ENCODE measurements at regions of chr22 and their contacts with region 1.

Region 1: DNA sequence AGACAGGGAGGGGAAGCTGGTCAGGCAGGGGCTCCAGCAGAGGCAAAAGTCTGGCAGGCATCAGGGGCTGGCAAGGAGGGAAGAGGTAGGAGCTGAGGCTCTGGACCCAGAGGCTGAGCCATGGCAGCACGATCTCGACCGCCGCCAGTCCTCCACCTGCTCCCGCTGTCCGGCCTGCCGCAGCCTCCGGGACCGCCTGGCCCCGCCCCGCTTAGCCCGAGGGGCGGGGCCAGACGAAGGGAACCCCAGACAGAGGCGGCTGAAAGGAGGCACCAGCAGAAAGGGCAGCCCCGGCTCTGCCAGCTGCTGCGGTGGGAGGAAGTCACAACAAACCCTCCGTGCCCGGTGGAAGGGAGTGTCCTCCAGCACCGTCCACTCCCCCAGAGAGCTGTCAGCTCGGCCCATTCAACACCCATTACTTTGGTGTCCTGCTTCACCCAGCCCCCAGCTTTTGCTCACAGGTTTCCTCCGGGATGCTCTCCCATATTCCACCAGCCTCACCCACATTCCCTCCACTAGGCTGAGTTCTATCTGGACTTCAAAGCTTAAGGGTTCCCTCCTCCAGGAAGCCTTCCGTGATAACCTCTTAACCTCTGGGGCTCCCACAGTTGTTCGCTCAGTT is at the start of gene MFNG:
- DNase-seq: peak; percentile 79
- H3K4me3 Mint-ChIP-seq: peak within 1 kb of the TSS; percentile 88
- H3K27ac Mint-ChIP-seq: peak within 1 kb of the TSS; percentile 93
- H3K4me1 Mint-ChIP-seq: peaks cover 61% of the 10 kb centered on the region
- H3K27me3 Mint-ChIP-seq: no peaks in the 10 kb centered on the region
- total RNA-seq, gene MFNG: 218 to 219 TPM

Region 2: DNA sequence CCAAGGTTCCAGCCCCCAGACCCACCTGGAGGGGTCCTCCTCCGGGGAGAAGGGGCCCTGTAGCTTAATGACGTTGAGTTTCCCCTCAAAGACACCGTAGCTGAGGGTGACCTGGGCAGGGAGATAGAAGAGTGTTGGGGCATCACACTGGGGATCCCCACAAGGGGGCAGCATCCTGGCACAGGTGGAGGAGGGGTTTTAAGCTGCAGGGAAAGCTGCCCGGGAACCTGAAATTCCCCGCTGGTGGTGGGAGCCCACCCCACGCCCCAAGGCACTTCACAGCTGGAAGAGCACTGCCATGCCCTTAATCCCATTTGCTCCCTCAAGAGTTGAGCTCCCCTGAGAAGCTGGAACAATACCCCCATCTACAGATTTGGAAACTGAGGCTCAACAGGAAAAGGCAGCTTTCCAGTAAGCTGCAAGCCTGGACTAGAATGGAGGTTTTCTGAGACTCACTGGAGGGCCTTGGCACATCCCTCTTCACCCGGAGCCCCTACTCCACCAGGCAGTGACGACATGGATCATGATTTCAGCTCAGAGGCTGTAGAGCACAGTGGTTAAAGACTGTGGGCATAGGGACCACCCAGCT is 13.8 kb before region 1 on chr22:
- CTCF ChIA-PET with region 1: interaction called, 13 read pairs
- POLR2A ChIA-PET with region 1: no interaction called
- DNase-seq: peak; percentile 53
- H3K4me3 Mint-ChIP-seq: no peak overlapping the region
- H3K27ac Mint-ChIP-seq: no peak overlapping the region
- H3K4me1 Mint-ChIP-seq: peaks cover 5% of the 10 kb centered on the region
- H3K27me3 Mint-ChIP-seq: no peaks in the 10 kb centered on the region

Region 3: DNA sequence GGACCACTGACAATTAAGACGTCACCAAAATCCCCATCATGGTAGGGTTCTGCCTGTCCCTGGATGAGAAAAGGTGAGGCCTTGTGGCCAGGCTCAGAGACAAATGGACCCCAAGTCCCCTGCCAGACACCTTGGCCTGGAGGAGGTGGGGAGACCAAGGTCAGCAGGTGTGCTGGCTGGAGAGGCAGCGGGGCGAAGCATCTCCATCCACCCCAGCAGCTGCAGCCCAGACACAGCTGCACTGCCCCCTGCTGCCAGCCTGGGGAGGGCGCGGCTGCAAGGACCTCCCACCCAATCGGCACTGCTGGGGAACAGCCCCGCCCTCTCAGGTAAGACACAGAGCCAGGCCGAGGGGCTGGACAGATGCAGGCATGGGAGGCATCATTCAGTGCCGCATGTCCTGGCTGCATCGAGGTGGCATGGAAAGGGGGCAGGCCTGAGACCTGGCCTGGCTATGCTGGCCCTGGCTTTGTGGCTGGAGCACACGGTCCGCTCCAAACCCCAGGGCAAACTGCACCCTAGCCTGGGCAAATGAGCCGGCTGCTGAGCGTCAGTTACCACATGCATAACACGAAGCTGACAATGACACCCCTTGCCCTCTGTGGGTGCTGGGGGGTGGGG is 12.1 kb after region 1 on chr22:
- CTCF ChIA-PET with region 1: interaction called, 14 read pairs
- POLR2A ChIA-PET with region 1: no interaction called
- DNase-seq: peak; percentile 73
- H3K4me3 Mint-ChIP-seq: no peak overlapping the region
- H3K27ac Mint-ChIP-seq: no peak overlapping the region
- H3K4me1 Mint-ChIP-seq: peaks cover 19% of the 10 kb centered on the region
- H3K27me3 Mint-ChIP-seq: peaks cover 12% of the 10 kb centered on the region